Endothelial cell of umbilical vein (primary cell): ENCODE measurements at regions of chr6 and their contacts with region 1.

Region 1: DNA sequence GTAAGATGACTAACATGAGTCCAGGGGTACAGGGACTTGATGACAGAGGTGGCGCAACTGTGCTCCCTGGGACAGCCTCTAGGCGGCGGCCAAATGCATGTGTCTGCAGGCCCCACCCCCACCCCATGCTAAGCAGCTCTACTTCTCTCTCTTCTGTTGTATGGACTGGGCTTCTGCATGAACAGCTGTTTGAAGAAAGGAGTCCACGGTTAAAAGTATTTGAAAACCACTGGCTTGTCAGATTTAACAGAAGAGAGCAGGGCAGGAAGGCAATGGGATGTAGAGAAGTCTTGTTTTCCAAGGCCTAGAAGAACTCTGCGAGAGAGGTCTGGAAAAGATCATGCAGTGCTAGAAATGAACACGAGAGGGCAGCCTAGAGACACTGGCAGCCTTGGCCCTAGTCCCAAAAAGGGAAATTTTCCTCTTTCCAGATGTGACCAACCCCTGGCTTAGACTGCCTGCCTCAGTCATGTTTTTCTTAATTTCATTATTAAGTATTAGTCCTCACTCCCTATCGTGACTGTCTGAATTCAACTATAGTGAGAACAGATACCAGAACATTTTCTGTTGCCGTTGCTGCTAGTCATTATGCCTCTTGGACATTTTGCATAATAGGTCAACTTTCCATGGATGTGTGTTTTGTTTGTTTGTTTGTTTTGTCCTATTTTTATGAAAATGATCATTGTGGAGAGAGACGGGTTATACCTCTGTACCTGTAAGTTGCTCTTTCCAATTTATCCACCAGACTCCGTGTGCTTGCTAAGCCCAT is 265.0 kb downstream of the ADGRG6 start:
- DNase-seq: peak; percentile 62
- H3K4me3 ChIP-seq: no peak overlapping the region
- H3K27ac ChIP-seq: no peak overlapping the region
- H3K4me1 ChIP-seq: no peaks in the 10 kb centered on the region
- H3K27me3 ChIP-seq: peaks cover 2 to 16% of the 10 kb centered on the region in 2 experiments
- CTCF ChIP-seq: peak; percentile 82 to 85
- POLR2A ChIP-seq: no peak

Region 2: DNA sequence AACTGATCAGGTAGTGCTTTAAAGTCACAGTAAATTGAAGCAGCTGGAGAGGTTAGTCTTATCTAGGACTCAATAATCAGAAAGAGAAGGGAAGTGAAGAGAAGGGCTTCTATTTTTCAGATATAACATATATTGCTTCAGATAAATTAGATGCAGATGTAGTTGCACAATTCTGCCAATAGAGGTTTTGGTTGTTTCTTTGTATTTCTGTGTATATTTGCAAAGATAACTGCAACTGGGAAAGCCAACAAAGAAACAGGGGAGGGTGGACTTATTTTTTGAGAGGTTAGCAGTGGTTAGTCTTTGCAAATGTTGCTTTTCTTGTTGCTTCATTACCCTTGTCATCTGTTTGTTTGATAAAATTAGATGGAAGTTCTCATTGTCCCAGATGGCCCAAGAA is 158.4 kb before region 1 on chr6:
- CTCF ChIA-PET with region 1: no interaction called
- POLR2A ChIA-PET with region 1: no interaction called
- dilution Hi-C with region 1: no loop called
- intact Hi-C with region 1: no loop called
- DNase-seq: peak; percentile 50
- H3K4me3 ChIP-seq: peak overlapping the region in 1 of 3 experiments; percentile 23
- H3K27ac ChIP-seq: peak overlapping the region; percentile 97
- H3K4me1 ChIP-seq: peaks cover 87% of the 10 kb centered on the region
- H3K27me3 ChIP-seq: no peaks in the 10 kb centered on the region
- CTCF ChIP-seq: peak; percentile 5 to 14
- POLR2A ChIP-seq: peak; percentile 34

Region 3: GRCh38 chr6:143279385-143279784 is 712.6 kb after region 1 on chr6:
- CTCF ChIA-PET with region 1: interaction called, 3 read pairs
- POLR2A ChIA-PET with region 1: no interaction called
- dilution Hi-C with region 1: no loop called
- intact Hi-C with region 1: loop called (anchors 1 kb)
- DNase-seq: peak; percentile 24
- H3K4me3 ChIP-seq: no peak overlapping the region
- H3K27ac ChIP-seq: no peak overlapping the region
- H3K4me1 ChIP-seq: no peaks in the 10 kb centered on the region
- H3K27me3 ChIP-seq: no peaks in the 10 kb centered on the region
- CTCF ChIP-seq: peak in 1 of 2 donors; percentile 28
- POLR2A ChIP-seq: no peak